ENCODE measurements at regions of chr19 and their contacts with region 1.

Region 1: GRCh38 chr19:38964738-38965137 is 10.8 kb downstream of the FBXO17 start:
- DNase-seq: no peak
- H3K4me3 Mint-ChIP-seq: no peak overlapping the region
- H3K27ac Mint-ChIP-seq: no peak overlapping the region
- H3K4me1 Mint-ChIP-seq: peaks cover 3% of the 10 kb centered on the region
- H3K27me3 Mint-ChIP-seq: peaks cover 8% of the 10 kb centered on the region

Region 2: DNA sequence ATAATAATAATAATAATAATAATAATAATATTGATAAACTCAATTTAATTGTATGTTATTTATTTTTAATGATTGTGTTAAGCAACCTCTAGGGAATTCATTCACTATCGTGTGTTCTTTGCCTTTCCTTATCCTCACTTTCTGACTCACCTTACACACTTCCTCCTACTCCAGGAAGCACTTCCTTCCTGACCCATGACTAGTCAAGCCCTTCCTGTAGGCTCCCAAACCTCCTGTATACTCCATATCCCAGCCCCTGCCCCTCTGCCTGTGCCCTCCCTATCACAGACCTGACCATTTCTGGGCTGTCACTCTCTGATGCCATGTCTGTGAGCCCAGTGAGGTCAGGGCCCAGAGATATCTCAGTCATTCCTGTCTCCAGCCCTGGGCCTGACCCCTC is 159.6 kb before region 1 on chr19:
- intact Hi-C with region 1: no loop called
- DNase-seq: no peak
- H3K4me3 Mint-ChIP-seq: no peak overlapping the region
- H3K27ac Mint-ChIP-seq: no peak overlapping the region
- H3K4me1 Mint-ChIP-seq: peaks cover 2% of the 10 kb centered on the region
- H3K27me3 Mint-ChIP-seq: no peaks in the 10 kb centered on the region

Region 3: DNA sequence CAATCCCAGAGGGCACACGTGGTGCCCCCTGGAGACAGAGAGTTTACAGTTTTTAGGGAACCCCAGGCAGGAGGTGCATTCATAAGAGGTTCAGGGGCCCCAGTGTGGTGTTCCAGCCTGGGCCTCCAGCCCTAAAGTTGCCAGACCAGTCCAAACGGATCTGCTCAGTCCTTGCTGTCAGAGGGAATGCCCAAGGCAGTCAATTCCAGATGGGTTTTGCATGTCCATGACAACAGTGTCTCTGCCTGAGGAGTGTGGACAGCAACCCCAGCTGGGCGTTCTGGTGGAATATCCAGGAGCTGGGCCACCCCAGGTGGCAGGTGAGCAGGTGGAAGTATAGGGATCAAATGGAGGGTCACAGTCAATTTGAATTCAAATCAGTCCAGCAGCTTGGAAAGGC is 42.4 kb after region 1 on chr19:
- intact Hi-C with region 1: loop called (anchors 2 kb)
- DNase-seq: no peak
- H3K4me3 Mint-ChIP-seq: no peak overlapping the region
- H3K27ac Mint-ChIP-seq: no peak overlapping the region
- H3K4me1 Mint-ChIP-seq: peaks cover 7% of the 10 kb centered on the region
- H3K27me3 Mint-ChIP-seq: peaks cover 13% of the 10 kb centered on the region

Region 4: DNA sequence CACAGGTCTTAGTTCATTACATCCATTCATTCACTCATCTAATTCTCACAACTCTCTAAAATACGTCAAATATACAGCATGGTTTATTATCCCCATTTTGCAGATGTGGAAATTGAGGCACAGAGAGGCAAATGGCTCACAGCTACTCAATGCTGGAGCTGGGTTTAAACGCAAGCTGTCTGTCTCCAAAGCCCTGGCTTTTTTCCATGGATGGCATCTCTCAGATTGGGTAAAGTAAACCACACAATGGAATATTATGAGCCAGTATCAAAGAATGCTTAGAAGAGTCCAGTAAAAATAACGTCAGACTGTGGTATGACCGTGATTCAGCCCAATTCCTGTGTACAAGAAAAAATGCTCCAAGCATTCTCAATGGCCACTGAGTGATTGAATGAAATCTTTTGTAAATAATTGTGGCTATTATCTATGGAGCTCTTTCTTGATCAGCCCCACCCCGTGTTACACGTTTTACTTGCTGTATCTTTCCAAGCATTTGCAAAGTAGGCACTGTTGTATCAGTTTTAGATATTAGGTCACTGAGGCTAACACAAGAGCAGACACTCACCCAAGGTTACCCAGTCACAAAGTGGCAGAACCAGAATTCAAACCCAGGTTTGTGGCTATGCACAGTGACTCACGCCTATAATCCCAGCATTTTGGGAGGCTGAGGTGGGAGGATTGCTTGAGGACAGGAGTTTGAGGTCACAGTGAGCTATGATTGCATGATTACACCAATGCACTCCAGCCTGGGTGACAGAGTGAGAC is 113.9 kb after region 1 on chr19:
- intact Hi-C with region 1: no loop called
- DNase-seq: no peak
- H3K4me3 Mint-ChIP-seq: no peak overlapping the region
- H3K27ac Mint-ChIP-seq: no peak overlapping the region
- H3K4me1 Mint-ChIP-seq: peaks cover 8% of the 10 kb centered on the region
- H3K27me3 Mint-ChIP-seq: peaks cover 25% of the 10 kb centered on the region